Posterior vena cava (tissue), 2 donors: ENCODE measurements at regions of chr1 and their contacts with region 1.

Region 1: DNA sequence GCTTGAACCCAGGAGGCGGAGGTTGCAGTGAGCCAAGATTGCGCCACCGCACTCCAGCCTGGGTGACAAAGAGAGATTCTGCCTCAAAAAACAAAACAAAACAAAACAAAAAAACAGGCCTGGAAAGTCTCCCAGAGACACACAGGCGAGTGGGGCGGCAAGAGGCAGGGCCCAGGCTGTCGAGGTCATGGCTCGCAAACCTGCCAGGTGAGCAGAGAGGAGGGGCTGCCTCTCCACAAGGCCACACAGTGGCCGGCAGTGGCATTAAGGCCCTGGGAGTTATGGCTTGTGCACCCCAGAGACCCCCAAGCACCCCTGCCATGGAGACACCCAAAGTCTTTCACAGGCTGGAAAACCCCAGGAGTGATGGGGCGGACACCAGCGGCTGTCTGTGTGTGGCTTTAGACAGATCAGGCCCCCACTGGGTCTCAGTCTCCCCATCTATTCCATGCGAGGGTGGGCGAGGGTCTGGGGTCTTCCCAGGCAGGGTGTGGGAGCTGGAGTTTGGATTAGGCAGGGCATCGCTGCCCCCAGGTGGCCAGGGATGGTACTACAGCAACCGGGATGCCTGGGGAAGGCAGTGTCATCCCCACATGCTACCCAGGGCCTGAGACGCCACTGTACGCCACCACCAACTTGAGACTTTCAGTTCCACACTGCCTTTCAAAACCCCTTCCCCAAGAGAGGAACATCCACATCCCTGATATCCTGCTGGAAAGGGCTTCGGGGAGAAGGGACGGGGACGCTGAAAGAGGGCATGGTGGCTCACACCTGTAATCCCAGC is 7.3 kb upstream of the CTRC start:
- DNase-seq: peak; percentile 89

Region 2: DNA sequence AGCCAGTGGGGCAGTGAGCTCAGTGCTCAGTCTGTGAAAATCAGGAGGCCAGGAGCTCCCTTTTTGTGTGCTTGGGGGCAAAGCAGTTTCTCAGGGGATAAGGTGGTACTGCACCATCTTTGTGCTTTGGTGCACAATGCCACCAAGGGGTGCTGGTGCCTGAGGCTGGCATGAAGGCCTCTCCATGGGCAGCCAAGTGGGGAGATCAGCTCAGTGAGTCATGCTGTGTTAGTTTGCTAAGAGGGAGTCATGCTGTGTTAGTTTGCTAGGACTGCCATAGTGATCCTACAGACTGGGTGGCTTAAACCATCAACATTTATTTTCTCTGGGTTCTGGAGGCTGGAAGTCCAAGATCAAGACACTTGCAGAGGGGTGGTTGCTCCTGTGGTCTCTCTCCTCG is 1302.9 kb before region 1 on chr1:
- intact Hi-C with region 1: no loop called
- DNase-seq: no peak

Region 3: GRCh38 chr1:15323351-15323988 is 107.5 kb before region 1 on chr1:
- intact Hi-C with region 1: loop called (anchors 1 to 5 kb)
- DNase-seq: peak; percentile 92